ENCODE measurements at regions of chr3 and their contacts with region 1.

Region 1: DNA sequence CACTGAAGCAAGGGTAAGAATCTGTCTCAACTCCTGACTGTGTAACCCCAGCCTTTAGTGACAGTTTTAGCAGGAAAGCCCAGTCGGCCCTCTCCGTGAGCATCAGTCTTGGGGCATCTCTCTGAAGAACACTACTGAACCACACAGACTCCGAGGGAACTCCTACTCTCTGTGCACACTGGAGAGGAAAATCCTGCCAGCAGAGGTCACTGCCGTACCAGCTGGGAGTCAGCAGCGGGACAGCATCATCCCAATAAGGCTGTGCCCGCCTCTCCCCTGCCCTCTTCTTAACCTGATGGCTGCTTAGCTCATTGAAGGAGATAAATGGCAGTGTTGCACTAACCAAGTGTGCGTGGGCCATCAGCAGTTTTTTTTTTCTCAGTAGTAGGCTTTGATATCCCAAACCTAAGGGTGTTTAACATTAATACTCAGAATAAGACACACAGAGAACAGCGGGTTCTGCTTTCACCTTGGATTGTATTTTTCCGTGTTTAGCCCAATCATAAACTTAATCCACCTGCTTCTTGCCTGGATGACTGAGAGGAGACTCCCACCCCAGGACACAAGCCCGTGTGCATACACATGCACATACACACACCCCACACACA is 26.6 kb upstream of the RASA2 start:
- DNase-seq: peak; percentile 89
- H3K4me3 Mint-ChIP-seq: no peak overlapping the region
- H3K27ac Mint-ChIP-seq: no peak overlapping the region
- H3K4me1 Mint-ChIP-seq: peaks cover 18% of the 10 kb centered on the region
- H3K27me3 Mint-ChIP-seq: no peaks in the 10 kb centered on the region

Region 2: DNA sequence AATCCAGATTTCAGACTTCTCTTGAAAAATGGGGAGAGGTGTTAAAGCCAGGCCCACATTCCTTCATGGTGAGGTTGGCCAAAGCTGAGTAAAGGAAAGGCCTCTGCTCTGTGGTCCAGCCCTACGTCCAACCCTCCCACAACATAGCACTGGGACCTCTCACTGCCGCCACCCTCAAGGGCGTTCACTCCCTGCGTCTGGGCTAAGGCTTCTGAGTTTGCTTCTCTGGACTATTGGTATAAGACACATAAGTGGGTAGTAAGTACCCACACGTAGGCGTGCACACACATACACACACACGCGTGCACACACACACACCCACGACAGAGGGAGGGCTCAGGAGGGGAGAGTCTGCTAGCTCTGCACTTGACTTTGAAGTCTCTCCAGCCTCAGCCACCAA is 308.8 kb before region 1 on chr3:
- CTCF ChIA-PET with region 1: no interaction called
- POLR2A ChIA-PET with region 1: no interaction called
- DNase-seq: no peak
- H3K4me3 Mint-ChIP-seq: no peak overlapping the region
- H3K27ac Mint-ChIP-seq: no peak overlapping the region
- H3K4me1 Mint-ChIP-seq: no peaks in the 10 kb centered on the region
- H3K27me3 Mint-ChIP-seq: peaks cover 4% of the 10 kb centered on the region

Region 3: DNA sequence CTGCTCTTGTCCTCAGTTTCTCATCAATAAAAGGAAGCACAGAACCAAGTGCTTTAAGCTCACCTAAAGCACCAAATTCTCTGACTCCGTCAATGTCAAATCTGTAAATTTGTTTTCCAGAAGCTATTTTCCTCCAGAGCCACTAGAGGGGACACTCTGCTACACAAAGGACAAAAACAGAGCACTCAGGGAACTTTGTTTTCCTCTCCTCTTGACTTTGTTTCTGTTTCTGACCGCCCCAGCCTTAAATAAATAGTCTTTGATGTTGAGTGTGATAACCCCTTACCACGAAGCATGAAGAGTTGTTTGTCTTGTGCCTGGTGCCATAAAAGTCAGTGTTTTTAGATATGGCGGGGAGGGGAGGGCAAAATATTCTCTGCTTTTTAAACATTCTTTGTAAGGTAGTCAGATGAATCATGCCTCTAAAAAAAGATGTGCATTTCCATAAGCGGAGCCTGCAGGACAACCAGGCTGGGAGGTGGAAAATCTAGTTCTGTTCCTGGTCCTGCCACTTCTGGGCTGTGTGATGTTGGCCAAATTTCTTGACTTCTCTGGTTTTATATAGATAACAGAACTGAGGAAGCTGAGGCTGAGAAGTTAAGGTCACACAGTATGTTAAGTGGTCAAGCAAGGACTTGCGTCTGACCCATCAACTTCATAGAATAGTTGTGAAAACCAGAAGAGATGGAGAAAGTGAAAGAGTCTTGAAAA is 99.2 kb before region 1 on chr3:
- CTCF ChIA-PET with region 1: interaction called, 136 read pairs
- POLR2A ChIA-PET with region 1: no interaction called
- DNase-seq: no peak
- H3K4me3 Mint-ChIP-seq: peak overlapping the region; percentile 19
- H3K27ac Mint-ChIP-seq: no peak overlapping the region
- H3K4me1 Mint-ChIP-seq: peaks cover 10% of the 10 kb centered on the region
- H3K27me3 Mint-ChIP-seq: peaks cover 3% of the 10 kb centered on the region

Region 4: DNA sequence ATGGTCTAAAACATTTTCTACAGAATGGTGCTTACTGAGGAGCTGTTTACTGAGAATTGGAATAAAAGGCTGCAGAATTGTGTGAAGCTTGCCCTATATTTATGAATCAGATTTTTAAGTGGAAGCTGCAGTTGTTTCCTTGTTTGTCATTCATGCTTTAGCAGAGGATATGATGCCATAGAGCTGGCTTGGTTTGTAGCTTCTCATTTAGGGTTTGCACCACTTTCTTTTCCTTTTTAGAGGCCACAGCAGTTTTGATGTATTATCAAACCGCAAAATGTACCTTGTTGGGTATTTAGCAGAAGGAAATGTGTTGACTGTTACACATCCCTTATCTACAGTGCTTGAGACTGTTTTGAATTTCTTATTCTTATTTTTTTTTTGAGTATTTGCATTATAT is 92.9 kb after region 1 on chr3:
- CTCF ChIA-PET with region 1: interaction called, 107 read pairs
- POLR2A ChIA-PET with region 1: interaction called, 3 read pairs
- DNase-seq: peak; percentile 23
- H3K4me3 Mint-ChIP-seq: no peak overlapping the region
- H3K27ac Mint-ChIP-seq: peak overlapping the region; percentile 92
- H3K4me1 Mint-ChIP-seq: peaks cover 39% of the 10 kb centered on the region
- H3K27me3 Mint-ChIP-seq: no peaks in the 10 kb centered on the region

Region 5: GRCh38 chr3:141570068-141570467 is 109.9 kb after region 1 on chr3:
- CTCF ChIA-PET with region 1: interaction called, 28 read pairs
- POLR2A ChIA-PET with region 1: no interaction called
- DNase-seq: no peak
- H3K4me3 Mint-ChIP-seq: no peak overlapping the region
- H3K27ac Mint-ChIP-seq: no peak overlapping the region
- H3K4me1 Mint-ChIP-seq: peaks cover 7% of the 10 kb centered on the region
- H3K27me3 Mint-ChIP-seq: no peaks in the 10 kb centered on the region

Region 6: DNA sequence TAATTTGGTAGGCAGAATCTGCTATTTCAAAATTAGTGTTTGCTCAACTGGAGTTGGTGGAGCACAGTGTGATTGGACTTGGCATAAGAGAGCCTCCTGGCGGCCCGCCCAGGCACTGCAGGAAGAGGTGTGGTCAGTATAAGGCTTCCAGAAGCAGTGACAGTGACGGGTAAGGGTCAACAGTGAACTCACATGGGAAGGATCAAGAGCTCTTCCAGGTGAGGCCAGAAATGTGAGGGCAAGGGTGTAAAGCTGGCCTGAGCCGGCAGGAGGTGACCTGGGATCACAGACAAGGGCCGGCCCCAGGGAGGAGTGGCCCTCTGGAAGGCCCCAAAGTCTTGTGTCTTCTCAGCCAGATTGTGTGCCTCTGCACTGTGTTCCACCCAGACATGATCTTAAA is 184.7 kb after region 1 on chr3:
- CTCF ChIA-PET with region 1: interaction called, 31 read pairs
- POLR2A ChIA-PET with region 1: no interaction called
- DNase-seq: peak; percentile 80
- H3K4me3 Mint-ChIP-seq: no peak overlapping the region
- H3K27ac Mint-ChIP-seq: no peak overlapping the region
- H3K4me1 Mint-ChIP-seq: peaks cover 3% of the 10 kb centered on the region
- H3K27me3 Mint-ChIP-seq: no peaks in the 10 kb centered on the region

Region 7: DNA sequence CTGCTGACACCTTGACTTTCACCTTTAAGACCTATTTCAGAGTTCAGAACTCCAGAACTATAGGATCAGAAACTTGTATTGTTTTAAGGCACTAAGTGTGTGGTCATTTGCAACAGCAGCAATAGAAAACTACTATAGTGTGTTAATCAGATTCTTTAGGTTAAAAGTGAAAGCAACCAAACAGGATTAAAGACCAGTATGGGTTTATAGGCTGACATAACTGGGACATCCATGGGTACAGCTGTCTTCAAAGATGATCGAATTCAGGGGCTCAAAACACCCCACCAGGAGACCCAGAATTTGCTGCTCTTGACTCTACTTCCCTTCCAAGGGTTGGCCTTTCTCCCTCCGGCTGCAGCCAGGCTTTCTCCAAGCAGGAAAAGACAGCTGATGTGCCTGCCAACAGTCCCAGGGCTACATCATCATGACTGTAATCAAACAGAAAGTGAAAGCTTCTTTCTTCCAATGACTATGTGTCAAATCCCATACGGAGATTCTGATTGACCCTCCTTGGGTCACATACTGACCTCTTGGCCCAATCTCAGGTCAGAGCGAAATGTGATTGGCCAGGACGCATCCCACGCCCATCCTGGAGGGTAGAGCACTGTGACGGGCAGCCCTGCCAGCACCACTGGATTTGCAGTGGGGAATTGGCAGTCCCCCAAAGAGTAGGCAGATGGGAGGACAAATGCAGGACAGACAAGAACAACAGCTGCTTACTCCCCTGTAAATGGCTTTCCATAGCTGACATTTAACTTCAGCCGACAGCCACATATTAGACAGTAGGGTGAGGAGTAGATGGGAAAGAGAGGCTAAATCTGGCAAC is 226.5 kb after region 1 on chr3:
- CTCF ChIA-PET with region 1: no interaction called
- POLR2A ChIA-PET with region 1: no interaction called
- DNase-seq: no peak
- H3K4me3 Mint-ChIP-seq: peak overlapping the region; percentile 63
- H3K27ac Mint-ChIP-seq: no peak overlapping the region
- H3K4me1 Mint-ChIP-seq: peaks cover 16% of the 10 kb centered on the region
- H3K27me3 Mint-ChIP-seq: no peaks in the 10 kb centered on the region

Measured in activated CD4-positive, alpha-beta memory T cell treated with anti-CD3 and anti-CD28 coated beads, Interleukin-2, amount 10 ng/mL, durations not matched to agents 7 days and 5 days (primary cell).